Activated T-helper 2 cell treated with anti-CD3 and anti-CD28 coated beads, Interferon-gamma antibody, Interleukin-2, Interleukin-4, amounts not matched to agents 10 μg/mL and 5 μg/mL and 100 μg/mL, durations not matched to agents 14 hours and 24 hours and 36 hours (primary cell): ENCODE measurements at regions of chr3 and their contacts with region 1.

Region 1: GRCh38 chr3:151227807-151228665 is 25.0 kb upstream of the GPR171 start:
- DNase-seq: peak; percentile 71
- H3K4me3 Mint-ChIP-seq: no peak overlapping the region
- H3K27ac Mint-ChIP-seq: peak overlapping the region; percentile 83
- H3K4me1 Mint-ChIP-seq: peaks cover 59% of the 10 kb centered on the region
- H3K27me3 Mint-ChIP-seq: no peaks in the 10 kb centered on the region

Region 2: DNA sequence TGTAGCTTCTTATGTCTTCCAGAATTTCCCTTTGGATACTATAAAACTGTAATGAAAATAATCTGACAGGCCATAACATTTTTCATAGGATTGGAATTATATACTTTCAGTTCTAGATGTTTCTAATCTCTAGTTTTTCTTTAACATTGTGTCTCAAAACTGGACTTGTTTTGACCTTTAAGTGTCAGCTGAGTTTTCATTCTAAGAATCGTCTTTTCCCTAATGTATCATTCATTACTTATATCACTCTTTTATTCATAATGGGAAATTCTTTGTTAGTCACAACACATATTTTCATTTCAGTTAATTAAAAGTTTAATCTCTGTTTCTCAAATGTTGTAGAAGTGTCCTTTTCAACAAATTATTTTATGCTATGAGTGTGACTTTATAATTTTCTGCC is 36.9 kb before region 1 on chr3:
- intact Hi-C with region 1: loop called (anchors 5 kb)
- DNase-seq: no peak
- H3K4me3 Mint-ChIP-seq: peak overlapping the region; percentile 65
- H3K27ac Mint-ChIP-seq: peak overlapping the region; percentile 97
- H3K4me1 Mint-ChIP-seq: peaks cover 48% of the 10 kb centered on the region
- H3K27me3 Mint-ChIP-seq: no peaks in the 10 kb centered on the region

Region 3: GRCh38 chr3:151282921-151283320 is 54.9 kb after region 1 on chr3:
- intact Hi-C with region 1: loop called (anchors 1 kb)
- DNase-seq: no peak
- H3K4me3 Mint-ChIP-seq: no peak overlapping the region
- H3K27ac Mint-ChIP-seq: peak overlapping the region; percentile 19
- H3K4me1 Mint-ChIP-seq: peaks cover 47% of the 10 kb centered on the region
- H3K27me3 Mint-ChIP-seq: no peaks in the 10 kb centered on the region

Region 4: DNA sequence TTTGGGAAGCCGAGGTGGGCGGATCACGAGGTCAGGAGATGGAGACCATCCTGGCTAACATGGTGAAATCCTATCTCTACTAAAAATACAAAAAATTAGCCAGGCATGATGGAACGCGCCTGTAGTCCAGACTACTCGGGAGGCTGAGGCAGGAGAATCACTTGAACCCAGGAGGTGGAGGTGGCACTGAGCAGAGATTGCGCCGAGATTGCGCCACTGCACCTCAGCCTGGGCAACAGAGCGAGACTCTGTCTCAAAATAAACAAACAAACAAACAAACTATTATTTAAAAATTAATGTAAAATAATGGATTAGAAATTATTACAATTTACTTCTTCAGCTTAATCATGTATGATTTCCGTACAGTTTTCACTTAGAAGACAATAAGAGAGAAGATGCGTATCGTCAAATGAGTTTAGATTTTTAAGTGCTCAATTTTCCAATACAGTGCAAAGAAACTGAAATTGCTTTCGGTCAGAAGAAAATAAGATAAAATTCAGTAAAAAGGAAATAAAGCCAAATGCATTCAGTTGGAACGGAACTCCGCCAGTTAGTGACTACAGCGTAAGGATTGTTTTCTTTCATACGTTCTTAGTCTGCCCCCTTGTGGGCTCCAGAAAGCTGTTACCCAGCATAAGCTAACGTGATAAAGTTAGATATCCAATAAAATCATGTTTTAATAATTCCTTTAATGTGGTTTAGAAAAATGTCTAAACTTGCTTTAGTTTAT is 610.7 kb after region 1 on chr3:
- intact Hi-C with region 1: loop called (anchors 2 kb)
- DNase-seq: no peak
- H3K4me3 Mint-ChIP-seq: no peak overlapping the region
- H3K27ac Mint-ChIP-seq: no peak overlapping the region
- H3K4me1 Mint-ChIP-seq: peaks cover 2% of the 10 kb centered on the region
- H3K27me3 Mint-ChIP-seq: peaks cover 39% of the 10 kb centered on the region

Region 5: GRCh38 chr3:152051501-152052404 is 823.7 kb after region 1 on chr3:
- intact Hi-C with region 1: no loop called
- DNase-seq: no peak
- H3K4me3 Mint-ChIP-seq: no peak overlapping the region
- H3K27ac Mint-ChIP-seq: no peak overlapping the region
- H3K4me1 Mint-ChIP-seq: no peaks in the 10 kb centered on the region
- H3K27me3 Mint-ChIP-seq: peaks cover 10% of the 10 kb centered on the region